ENCODE measurements at regions of chr1 and their contacts with region 1.

Region 1: GRCh38 chr1:156608036-156608674 is 6.9 kb upstream of the GPATCH4 start:
- DNase-seq: peak; percentile 48 to 59
- ATAC-seq: peak; percentile 99 to 100
- H3K4me3 ChIP-seq: no peak overlapping the region
- H3K27ac ChIP-seq: no peak overlapping the region
- H3K4me1 ChIP-seq: no peaks in the 10 kb centered on the region
- H3K27me3 ChIP-seq: no peaks in the 10 kb centered on the region
- CTCF ChIP-seq: peak; percentile 73 to 81 (median 80)
- POLR2A ChIP-seq: no peak

Region 2: GRCh38 chr1:156233426-156234127 is 374.6 kb before region 1 on chr1:
- in situ Hi-C with region 1: no loop called
- intact Hi-C with region 1: no loop called
- DNase-seq: no peak
- ATAC-seq: no peak
- H3K4me3 ChIP-seq: no peak overlapping the region
- H3K27ac ChIP-seq: no peak overlapping the region
- H3K4me1 ChIP-seq: no peaks in the 10 kb centered on the region
- H3K27me3 ChIP-seq: no peaks in the 10 kb centered on the region
- CTCF ChIP-seq: no peak
- POLR2A ChIP-seq: no peak

Region 3: DNA sequence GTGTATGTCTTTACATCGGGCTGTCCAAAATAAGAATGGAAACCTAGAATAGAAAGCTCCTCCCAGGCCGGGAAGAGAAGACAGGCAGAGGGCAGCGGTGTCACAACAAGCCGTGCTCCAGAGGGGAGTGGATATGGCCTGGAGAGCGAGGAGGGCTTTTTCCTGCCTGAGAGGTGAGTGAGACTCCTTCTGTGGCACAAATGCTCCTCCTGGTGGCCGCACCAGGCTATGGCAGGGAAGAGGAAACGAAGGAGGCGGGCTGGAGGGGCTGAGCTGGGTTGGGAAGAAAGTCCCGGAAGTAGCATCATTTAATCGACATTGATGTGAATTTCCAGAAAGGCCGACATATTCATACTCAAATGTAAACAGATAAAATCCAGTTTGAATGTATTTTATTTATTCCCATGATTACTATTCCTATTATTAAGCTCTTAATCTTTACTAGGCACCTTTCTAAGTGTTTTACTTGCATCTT is 162.3 kb before region 1 on chr1:
- in situ Hi-C with region 1: loop called (anchors 5 kb)
- intact Hi-C with region 1: loop called (anchors 2 kb)
- DNase-seq: peak; percentile 46 to 72
- ATAC-seq: peak; percentile 78 to 94
- H3K4me3 ChIP-seq: peak overlapping the region in 1 of 4 donors; percentile 18
- H3K27ac ChIP-seq: no peak overlapping the region
- H3K4me1 ChIP-seq: no peaks in the 10 kb centered on the region
- H3K27me3 ChIP-seq: peaks cover 27 to 41% (median 40%) of the 10 kb centered on the region in 3 donors
- CTCF ChIP-seq: peak; percentile 88 to 95 (median 92)
- POLR2A ChIP-seq: no peak

Region 4: DNA sequence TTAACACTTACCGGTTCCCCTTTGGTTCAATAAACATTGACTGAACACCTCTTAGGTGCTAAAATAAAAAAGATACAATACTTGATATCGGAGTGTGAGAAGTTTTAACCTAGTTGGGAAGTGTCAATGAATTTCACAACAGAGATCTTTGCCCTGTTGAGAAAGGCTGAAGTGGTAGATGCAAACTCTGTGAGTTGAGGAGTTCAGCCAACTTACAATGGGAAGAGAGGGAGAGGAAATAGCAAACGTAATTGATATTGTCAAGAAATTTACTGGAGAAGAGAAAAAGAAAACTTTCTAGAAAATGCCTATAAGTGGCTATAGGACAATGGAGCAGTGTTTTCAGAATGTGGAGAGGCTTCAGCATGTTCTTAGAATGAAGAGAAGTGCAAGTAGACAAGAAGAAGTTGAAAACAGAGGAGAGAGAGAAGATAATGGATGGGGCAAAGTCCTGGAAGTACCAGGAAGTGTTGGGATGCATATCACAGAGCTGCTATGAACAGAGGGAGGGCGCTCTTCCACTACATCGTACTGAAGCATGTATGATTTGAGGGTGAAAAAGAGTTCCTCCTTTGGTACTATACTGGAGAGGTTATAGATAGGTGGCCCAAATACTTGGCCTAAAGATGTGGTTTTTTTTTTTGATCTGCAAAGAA is 156.5 kb before region 1 on chr1:
- in situ Hi-C with region 1: loop called (anchors 5 kb)
- intact Hi-C with region 1: loop called (anchors 1 kb)
- DNase-seq: no peak
- ATAC-seq: no peak
- H3K4me3 ChIP-seq: no peak overlapping the region
- H3K27ac ChIP-seq: no peak overlapping the region
- H3K4me1 ChIP-seq: no peaks in the 10 kb centered on the region
- H3K27me3 ChIP-seq: no peaks in the 10 kb centered on the region
- CTCF ChIP-seq: no peak
- POLR2A ChIP-seq: no peak

Region 5: GRCh38 chr1:156583821-156584622 is 24.1 kb before region 1 on chr1:
- in situ Hi-C with region 1: no loop called
- intact Hi-C with region 1: loop called (anchors 1 kb)
- DNase-seq: peak; percentile 40 to 63
- ATAC-seq: peak; percentile 71 to 75
- H3K4me3 ChIP-seq: no peak overlapping the region
- H3K27ac ChIP-seq: no peak overlapping the region
- H3K4me1 ChIP-seq: peaks cover 0 to 9% of the 10 kb centered on the region in 2 donors
- H3K27me3 ChIP-seq: no peaks in the 10 kb centered on the region
- CTCF ChIP-seq: peak; percentile 75 to 94 (median 90)
- POLR2A ChIP-seq: no peak